Posterior vena cava (tissue), 2 donors: ENCODE measurements at regions of chr7 and their contacts with region 1.

Region 1: GRCh38 chr7:6175645-6176044 is 96.8 kb downstream of the CYTH3 start:
- DNase-seq: no peak

Region 2: DNA sequence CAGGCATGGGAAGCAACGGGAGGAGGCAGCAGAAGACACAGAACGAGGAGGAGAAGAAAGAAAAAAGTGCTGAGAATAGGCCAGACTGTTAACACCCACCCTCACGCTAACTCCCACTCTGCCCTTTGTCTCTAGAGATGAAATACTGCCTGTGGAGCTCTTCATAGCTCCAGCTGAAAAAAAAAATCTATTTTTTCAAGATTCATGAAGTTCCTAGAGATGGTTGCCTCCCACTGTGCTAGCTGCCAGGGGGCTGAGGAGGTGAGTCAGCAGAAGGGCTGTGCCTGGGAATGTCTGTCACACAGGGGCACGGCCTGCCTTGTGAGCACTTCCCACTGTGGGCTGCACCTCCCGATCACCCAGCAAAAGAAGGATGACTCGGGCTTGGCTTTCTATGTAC is 538.7 kb before region 1 on chr7:
- intact Hi-C with region 1: no loop called
- DNase-seq: peak; percentile 95

Region 3: GRCh38 chr7:5838761-5839500 is 336.7 kb before region 1 on chr7:
- intact Hi-C with region 1: no loop called
- DNase-seq: no peak

Region 4: GRCh38 chr7:6148724-6149360 is 26.8 kb before region 1 on chr7:
- intact Hi-C with region 1: no loop called
- DNase-seq: peak; percentile 37

Region 5: DNA sequence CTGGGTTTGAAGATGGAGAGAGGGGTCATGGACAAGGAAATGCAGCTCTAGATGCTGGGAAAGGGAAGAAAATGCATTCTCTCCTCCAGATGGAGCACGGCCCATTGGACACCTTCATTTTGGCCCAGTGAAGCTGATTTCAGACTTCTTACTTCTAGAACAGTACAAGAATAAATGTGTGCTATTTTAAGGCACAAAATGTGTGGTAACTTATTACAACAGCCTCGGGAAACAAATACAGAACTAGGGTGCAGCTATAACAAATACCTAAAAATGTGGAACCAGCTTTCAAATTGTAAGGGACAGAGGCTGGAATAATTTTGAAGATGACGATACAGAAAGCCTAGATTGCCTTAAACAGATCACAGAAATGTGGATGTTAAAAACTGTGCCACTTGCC is 42.7 kb after region 1 on chr7:
- intact Hi-C with region 1: loop called in 1 of 2 experiments (anchors 5 kb)
- DNase-seq: no peak

Region 6: DNA sequence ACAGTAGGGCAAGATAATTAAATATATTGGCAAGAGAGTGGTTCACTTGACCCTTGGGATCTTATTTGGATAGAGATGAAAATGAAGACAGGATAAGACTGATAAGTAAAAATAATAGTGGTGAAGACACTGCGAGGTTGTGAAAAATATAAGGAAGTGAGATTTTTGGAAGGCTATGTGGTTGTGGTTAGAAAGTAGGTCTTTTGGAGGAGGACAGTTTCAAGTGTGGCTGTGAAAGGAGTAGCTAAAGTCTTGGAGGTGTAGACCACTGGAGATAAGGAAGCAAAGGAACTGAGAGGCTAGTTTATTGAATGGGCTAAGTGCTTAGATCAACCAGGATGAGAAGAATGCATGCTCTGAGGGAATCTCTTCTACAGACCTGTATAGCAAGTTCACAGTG is 1402.2 kb after region 1 on chr7:
- intact Hi-C with region 1: loop called in 1 of 2 experiments (anchors 10 kb)
- DNase-seq: no peak